ENCODE measurements at regions of chr2 and their contacts with region 1.

Region 1: GRCh38 chr2:180125245-180125962 is 118.3 kb upstream of the CWC22 start:
- DNase-seq: peak; percentile 94
- H3K4me3 ChIP-seq: no peak overlapping the region
- H3K27ac ChIP-seq: no peak overlapping the region
- H3K27me3 ChIP-seq: no peaks in the 10 kb centered on the region
- CTCF ChIP-seq: peak; percentile 76

Region 2: DNA sequence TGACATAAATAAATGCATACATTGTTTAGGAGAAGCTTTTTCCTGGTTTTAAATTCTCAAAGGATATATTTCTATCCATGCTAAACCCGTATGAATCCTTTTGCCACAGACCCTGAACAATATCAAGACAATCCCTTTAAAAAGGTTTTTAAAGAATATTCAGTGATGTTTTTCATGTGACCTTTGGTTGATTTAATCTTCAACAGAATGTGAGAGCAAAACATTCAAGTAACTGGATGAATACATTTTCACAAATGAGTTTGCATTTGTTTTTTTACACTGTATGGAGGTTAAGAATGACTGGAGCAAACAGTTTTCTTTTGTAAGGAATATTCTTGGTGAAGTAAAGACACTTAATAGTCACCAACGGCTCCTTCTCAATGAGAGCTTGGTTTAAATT is 21.1 kb after region 1 on chr2:
- CTCF ChIA-PET with region 1: interaction called, 12 read pairs
- POLR2A ChIA-PET with region 1: no interaction called
- DNase-seq: no peak
- H3K4me3 ChIP-seq: no peak overlapping the region
- H3K27ac ChIP-seq: no peak overlapping the region
- H3K27me3 ChIP-seq: no peaks in the 10 kb centered on the region
- CTCF ChIP-seq: no peak

Region 3: GRCh38 chr2:180334514-180334913 is 209.1 kb after region 1 on chr2:
- CTCF ChIA-PET with region 1: no interaction called
- POLR2A ChIA-PET with region 1: no interaction called
- DNase-seq: no peak
- H3K4me3 ChIP-seq: no peak overlapping the region
- H3K27ac ChIP-seq: no peak overlapping the region
- H3K27me3 ChIP-seq: no peaks in the 10 kb centered on the region
- CTCF ChIP-seq: no peak

Region 4: GRCh38 chr2:180980106-180980942 is 854.9 kb after region 1 on chr2 and contains the start of gene UBE2E3:
- CTCF ChIA-PET with region 1: interaction called, 43 read pairs
- POLR2A ChIA-PET with region 1: no interaction called
- DNase-seq: peak; percentile 42
- H3K4me3 ChIP-seq: peak within 1 kb of the TSS; percentile 82
- H3K27ac ChIP-seq: peak within 1 kb of the TSS; percentile 83
- H3K27me3 ChIP-seq: no peaks in the 10 kb centered on the region
- CTCF ChIP-seq: peak; percentile 70
- polyA plus RNA-seq, gene UBE2E3: 124 and 127 TPM in 2 replicates

Region 5: GRCh38 chr2:181070119-181070835 is 944.9 kb after region 1 on chr2:
- CTCF ChIA-PET with region 1: interaction called, 12 read pairs
- POLR2A ChIA-PET with region 1: no interaction called
- DNase-seq: no peak
- H3K4me3 ChIP-seq: no peak overlapping the region
- H3K27ac ChIP-seq: no peak overlapping the region
- H3K27me3 ChIP-seq: no peaks in the 10 kb centered on the region
- CTCF ChIP-seq: no peak

Region 6: GRCh38 chr2:181104512-181105115 is 979.2 kb after region 1 on chr2:
- CTCF ChIA-PET with region 1: interaction called, 42 read pairs
- POLR2A ChIA-PET with region 1: no interaction called
- DNase-seq: peak; percentile 46
- H3K4me3 ChIP-seq: no peak overlapping the region
- H3K27ac ChIP-seq: no peak overlapping the region
- H3K27me3 ChIP-seq: no peaks in the 10 kb centered on the region
- CTCF ChIP-seq: peak; percentile 90

Region 7: DNA sequence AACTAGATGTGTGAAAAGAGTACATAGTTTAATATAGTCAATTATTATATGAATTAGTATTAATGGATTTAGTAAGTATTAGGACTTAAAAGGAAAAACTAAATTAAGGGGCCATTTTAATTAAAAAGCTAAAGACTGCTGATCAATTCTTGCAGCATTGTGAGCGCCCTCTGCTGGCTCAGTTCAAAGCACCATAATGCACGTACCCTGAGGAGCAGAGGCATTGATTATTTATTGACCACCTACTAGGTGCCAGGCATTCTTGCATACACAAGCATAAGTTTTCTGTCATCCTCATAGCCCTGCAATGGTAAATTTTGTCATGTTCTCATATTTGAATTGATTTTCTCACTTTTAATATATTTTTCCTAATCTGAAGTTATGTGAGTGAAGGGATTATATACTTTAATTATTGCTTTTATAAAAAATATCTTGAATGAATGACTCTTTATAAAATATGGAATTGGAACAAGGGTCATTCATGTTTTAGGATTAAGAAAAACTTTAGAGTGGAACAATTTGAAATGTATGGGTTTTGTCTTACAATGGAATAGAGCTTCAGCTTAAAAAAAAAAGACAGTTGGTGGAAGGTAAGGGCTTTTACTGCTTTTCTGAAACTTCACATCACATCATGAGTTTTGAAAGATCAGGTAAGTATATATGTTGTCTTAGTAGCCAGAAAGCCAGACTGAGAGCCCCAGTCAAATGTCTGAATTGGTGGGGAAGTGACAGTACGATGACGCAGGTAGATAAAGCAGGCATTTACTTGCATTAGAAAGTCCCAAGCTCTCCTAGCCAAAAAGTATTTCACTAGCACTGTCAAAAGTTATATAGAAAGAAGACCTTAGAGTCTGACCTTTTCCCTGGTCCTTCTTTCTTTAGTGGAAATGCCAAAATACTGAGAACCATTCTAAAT is 1341.5 kb after region 1 on chr2:
- CTCF ChIA-PET with region 1: interaction called, 40 read pairs
- POLR2A ChIA-PET with region 1: no interaction called
- DNase-seq: peak; percentile 20
- H3K4me3 ChIP-seq: no peak overlapping the region
- H3K27ac ChIP-seq: no peak overlapping the region
- H3K27me3 ChIP-seq: no peaks in the 10 kb centered on the region
- CTCF ChIP-seq: peak; percentile 88